HCT116 (cell line): ENCODE measurements at regions of chrX and their contacts with region 1.

Region 1: GRCh38 chrX:109856974-109857373 is 123.9 kb upstream of the ACSL4 start:
- DNase-seq: no peak
- ATAC-seq: no peak
- H3K4me3 ChIP-seq: no peak overlapping the region
- H3K27ac ChIP-seq: no peak overlapping the region
- H3K4me1 ChIP-seq: peaks cover 0 to 4% of the 10 kb centered on the region in 2 experiments; a peak in 1 of 4 replicates
- H3K27me3 ChIP-seq: no peaks in the 10 kb centered on the region
- CTCF ChIP-seq: peak; percentile 48 to 74 (median 48); a peak in 5 of 6 replicates
- POLR2A ChIP-seq: no peak
- RAD21 ChIP-seq: peak; percentile 68

Region 2: DNA sequence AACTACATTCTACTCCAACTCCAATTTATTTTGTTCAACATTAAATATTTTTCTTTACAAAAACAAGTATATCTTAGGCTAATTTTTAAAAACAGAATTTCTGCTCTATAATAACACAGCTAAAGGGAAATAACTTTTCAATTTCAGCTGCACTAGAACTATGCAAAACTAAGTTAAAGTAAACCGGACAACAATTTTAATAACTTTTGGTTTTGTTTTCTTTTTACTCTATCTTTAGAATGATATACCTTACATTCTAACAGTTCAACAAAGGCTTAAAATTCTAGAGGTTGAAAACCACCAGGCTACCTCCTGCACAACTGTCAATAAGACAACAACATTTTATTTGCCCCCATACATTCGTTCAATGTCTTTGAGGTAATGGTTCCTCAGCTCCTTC is 213.3 kb before region 1 on chrX:
- CTCF ChIA-PET with region 1: no interaction called
- POLR2A ChIA-PET with region 1: no interaction called
- RAD21 ChIA-PET with region 1: no interaction called
- intact Hi-C with region 1: no loop called
- DNase-seq: no peak
- ATAC-seq: no peak
- H3K4me3 ChIP-seq: no peak overlapping the region
- H3K27ac ChIP-seq: no peak overlapping the region
- H3K4me1 ChIP-seq: no peaks in the 10 kb centered on the region
- H3K27me3 ChIP-seq: no peaks in the 10 kb centered on the region
- CTCF ChIP-seq: no peak
- POLR2A ChIP-seq: no peak
- RAD21 ChIP-seq: no peak

Region 3: DNA sequence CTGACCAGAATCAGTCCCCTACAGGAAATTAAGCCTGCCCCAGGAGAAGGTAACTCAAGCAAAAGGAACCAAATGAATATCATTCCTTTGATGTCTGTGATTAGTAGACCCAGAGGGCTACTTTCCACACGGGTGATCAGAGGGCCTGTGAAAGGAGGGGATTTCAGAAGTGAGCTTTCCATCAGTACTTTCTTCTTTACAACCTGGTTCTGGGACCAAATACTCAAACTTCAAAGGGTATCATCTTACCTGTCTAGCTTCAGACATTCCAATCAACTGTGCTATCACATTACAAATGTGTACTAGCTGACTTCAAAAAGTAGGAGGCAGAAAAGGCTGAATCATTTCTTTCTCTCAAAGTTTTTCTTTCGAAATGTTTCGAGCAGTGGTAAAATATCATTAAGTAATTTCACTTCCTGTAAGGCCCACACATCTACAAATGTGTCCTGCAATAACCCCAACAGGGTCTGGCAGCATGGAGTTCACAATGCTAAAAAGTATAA is 147.8 kb before region 1 on chrX:
- CTCF ChIA-PET with region 1: interaction called, 60 read pairs
- POLR2A ChIA-PET with region 1: no interaction called
- RAD21 ChIA-PET with region 1: interaction called, 6 to 10 read pairs
- intact Hi-C with region 1: loop called (anchors 1 kb)
- DNase-seq: peak; percentile 19
- ATAC-seq: peak; percentile 76
- H3K4me3 ChIP-seq: no peak overlapping the region
- H3K27ac ChIP-seq: peak overlapping the region; percentile 45; the same call in 1 of the 2 replicates
- H3K4me1 ChIP-seq: peaks cover 19 to 38% of the 10 kb centered on the region in 2 experiments
- H3K27me3 ChIP-seq: no peaks in the 10 kb centered on the region
- CTCF ChIP-seq: no peak
- POLR2A ChIP-seq: no peak
- RAD21 ChIP-seq: no peak

Region 4: GRCh38 chrX:109714340-109714958 is 142.5 kb before region 1 on chrX:
- CTCF ChIA-PET with region 1: interaction called, 60 read pairs
- POLR2A ChIA-PET with region 1: no interaction called
- RAD21 ChIA-PET with region 1: interaction called, 6 to 10 read pairs
- intact Hi-C with region 1: loop called (anchors 1 kb)
- DNase-seq: peak; percentile 15
- ATAC-seq: peak; percentile 80
- H3K4me3 ChIP-seq: no peak overlapping the region
- H3K27ac ChIP-seq: no peak overlapping the region
- H3K4me1 ChIP-seq: peaks cover 15 to 31% of the 10 kb centered on the region in 2 experiments
- H3K27me3 ChIP-seq: no peaks in the 10 kb centered on the region
- CTCF ChIP-seq: no peak
- POLR2A ChIP-seq: no peak
- RAD21 ChIP-seq: no peak